CD4-positive, alpha-beta T cell (primary cell): ENCODE measurements at regions of chr2 and their contacts with region 1.

Region 1: DNA sequence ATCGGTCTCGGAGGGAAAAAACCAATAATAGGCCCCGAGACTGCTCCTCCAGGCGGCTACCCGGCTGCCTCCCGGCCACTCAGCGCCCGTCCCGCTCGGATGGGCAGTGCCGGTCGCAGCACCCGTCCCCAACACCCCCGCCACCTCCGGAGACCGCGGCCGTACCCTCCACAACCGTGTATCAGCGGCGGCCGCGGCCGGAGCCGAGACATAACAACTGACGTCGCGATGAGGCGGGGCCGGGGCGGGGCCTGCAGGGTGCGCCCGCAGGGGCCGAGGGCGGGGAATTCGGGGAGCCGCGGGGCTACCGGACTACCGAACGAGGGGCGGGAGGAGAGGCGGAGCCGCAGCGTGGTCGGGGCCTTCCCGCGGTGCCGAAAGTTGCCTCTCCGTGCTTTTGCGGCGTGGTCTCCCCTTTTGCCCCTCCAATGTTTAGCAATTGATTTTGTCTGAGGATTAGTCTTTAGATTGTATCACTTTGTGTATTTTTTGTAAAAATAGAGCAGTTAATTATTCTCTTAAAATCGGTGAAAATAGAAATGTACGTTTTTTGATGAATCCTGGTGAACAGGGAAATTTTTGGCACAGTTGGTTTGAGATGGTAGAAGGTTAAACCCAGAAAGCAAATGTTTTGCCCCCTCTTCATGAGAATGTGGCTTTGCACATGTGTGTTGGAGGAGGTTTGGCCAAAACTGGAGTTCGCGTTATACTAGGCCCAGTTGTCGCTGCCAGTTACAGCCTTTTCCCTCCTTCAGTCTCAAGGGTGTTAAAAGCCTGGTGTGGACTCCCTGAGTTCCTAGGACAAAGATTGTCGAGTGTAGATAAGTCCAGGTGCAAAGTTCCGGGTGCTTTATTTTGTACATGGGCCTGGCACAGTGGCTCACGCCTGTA is at the start of gene RNF103:
- DNase-seq: peak; percentile 85 to 96 (median 94)
- ATAC-seq: peak; percentile 88
- H3K4me3 ChIP-seq: peak within 1 kb of the TSS; percentile 61
- H3K4me3 Mint-ChIP-seq: peak within 1 kb of the TSS; percentile 94
- H3K27ac ChIP-seq: peak within 1 kb of the TSS; percentile 91 to 93
- H3K27ac Mint-ChIP-seq: peak within 1 kb of the TSS; percentile 92
- H3K4me1 ChIP-seq: peaks cover 10% of the 10 kb centered on the region
- H3K4me1 Mint-ChIP-seq: peaks cover 40% of the 10 kb centered on the region
- H3K27me3 ChIP-seq: no peaks in the 10 kb centered on the region
- H3K27me3 Mint-ChIP-seq: peaks cover 3% of the 10 kb centered on the region
- CTCF ChIP-seq: no peak
- total RNA-seq, gene RNF103: 124 to 130 TPM

Region 2: GRCh38 chr2:86195055-86195807 is 428.7 kb before region 1 on chr2 and contains the start of gene IMMT:
- CTCF ChIA-PET with region 1: no interaction called
- POLR2A ChIA-PET with region 1: no interaction called
- intact Hi-C with region 1: loop called in 1 of 2 experiments (anchors 5 kb)
- DNase-seq: peak; percentile 84 to 97 (median 90)
- ATAC-seq: peak; percentile 89
- H3K4me3 ChIP-seq: peak within 1 kb of the TSS; percentile 87
- H3K4me3 Mint-ChIP-seq: peak within 1 kb of the TSS; percentile 89
- H3K27ac ChIP-seq: peak within 1 kb of the TSS; percentile 96 to 98
- H3K27ac Mint-ChIP-seq: peak within 1 kb of the TSS; percentile 85
- H3K4me1 ChIP-seq: peaks cover 45% of the 10 kb centered on the region
- H3K4me1 Mint-ChIP-seq: peaks cover 71% of the 10 kb centered on the region
- H3K27me3 ChIP-seq: no peaks in the 10 kb centered on the region
- H3K27me3 Mint-ChIP-seq: no peaks in the 10 kb centered on the region
- CTCF ChIP-seq: no peak
- total RNA-seq, gene IMMT: 39.5 to 40.8 TPM

Region 3: DNA sequence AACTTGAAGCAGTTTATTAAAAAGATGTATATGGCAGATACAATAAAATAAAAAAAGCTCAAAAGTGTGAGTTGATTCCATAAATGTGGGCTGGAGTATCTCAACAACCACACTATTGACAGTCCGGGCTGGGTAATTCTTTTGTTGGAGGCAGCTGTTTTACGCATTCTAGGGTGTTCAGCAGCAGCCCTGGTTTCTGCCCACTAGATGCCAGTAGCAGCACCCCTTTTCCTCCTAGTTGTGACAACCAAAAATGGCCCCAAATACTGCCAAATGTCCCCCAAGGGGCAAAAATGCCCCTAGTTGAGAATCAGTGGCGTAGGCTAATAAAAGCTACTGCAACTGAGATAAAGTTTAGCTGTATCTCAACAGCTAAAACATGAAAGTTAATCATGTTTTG is 105.4 kb before region 1 on chr2:
- CTCF ChIA-PET with region 1: interaction called, 7 read pairs
- POLR2A ChIA-PET with region 1: interaction called, 12 read pairs
- intact Hi-C with region 1: loop called (anchors 1 to 5 kb)
- DNase-seq: peak; percentile 14 to 70 (median 32)
- ATAC-seq: peak; percentile 66
- H3K4me3 ChIP-seq: no peak overlapping the region
- H3K4me3 Mint-ChIP-seq: no peak overlapping the region
- H3K27ac ChIP-seq: no peak overlapping the region
- H3K27ac Mint-ChIP-seq: no peak overlapping the region
- H3K4me1 ChIP-seq: no peaks in the 10 kb centered on the region
- H3K4me1 Mint-ChIP-seq: peaks cover 16% of the 10 kb centered on the region
- H3K27me3 ChIP-seq: no peaks in the 10 kb centered on the region
- H3K27me3 Mint-ChIP-seq: no peaks in the 10 kb centered on the region
- CTCF ChIP-seq: peak; percentile 70

Region 4: DNA sequence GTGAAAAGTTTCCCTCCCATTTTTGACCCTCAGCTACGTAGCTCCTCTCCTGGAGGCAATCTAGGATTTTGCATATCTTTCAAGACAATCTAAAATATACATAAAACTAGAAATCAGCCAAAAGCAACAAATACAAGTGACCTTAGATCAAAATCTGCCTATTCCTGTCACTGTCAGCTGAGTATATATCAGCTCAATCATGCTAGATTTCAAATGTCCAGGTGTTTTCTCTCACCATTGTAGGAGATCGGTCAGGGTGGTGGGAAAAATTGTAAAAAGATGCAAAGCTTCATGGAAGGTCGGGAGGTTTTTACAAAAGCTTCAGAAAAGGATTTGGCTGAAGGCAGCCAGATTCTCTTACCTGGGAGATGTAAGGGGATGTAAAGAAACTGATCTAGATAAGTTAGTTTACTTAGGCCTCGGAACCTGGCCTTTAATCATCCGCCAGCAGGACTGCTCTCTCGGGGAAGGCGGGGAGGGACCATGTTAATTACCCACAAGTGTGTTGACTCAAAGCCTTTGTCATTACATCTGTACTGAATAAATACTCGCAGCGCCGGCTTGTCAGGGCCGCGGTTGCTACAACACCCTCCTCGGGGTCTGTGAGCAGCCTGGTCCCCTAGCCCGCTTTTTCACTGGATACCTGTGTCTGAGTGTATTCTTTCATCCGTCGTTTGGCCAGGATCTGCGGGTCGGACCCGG is 67.5 kb before region 1 on chr2:
- CTCF ChIA-PET with region 1: no interaction called
- POLR2A ChIA-PET with region 1: interaction called, 39 read pairs
- intact Hi-C with region 1: no loop called
- DNase-seq: no peak
- ATAC-seq: no peak
- H3K4me3 ChIP-seq: no peak overlapping the region
- H3K4me3 Mint-ChIP-seq: no peak overlapping the region
- H3K27ac ChIP-seq: no peak overlapping the region
- H3K27ac Mint-ChIP-seq: no peak overlapping the region
- H3K4me1 ChIP-seq: peaks cover 35% of the 10 kb centered on the region
- H3K4me1 Mint-ChIP-seq: peaks cover 55% of the 10 kb centered on the region
- H3K27me3 ChIP-seq: no peaks in the 10 kb centered on the region
- H3K27me3 Mint-ChIP-seq: no peaks in the 10 kb centered on the region
- CTCF ChIP-seq: no peak

Region 5: GRCh38 chr2:86584151-86584913 is 39.6 kb before region 1 on chr2:
- CTCF ChIA-PET with region 1: no interaction called
- POLR2A ChIA-PET with region 1: interaction called, 29 read pairs
- intact Hi-C with region 1: no loop called
- DNase-seq: peak in 4 of 14 experiments; percentile 43 to 61 (median 48)
- ATAC-seq: peak; percentile 91
- H3K4me3 ChIP-seq: no peak overlapping the region
- H3K4me3 Mint-ChIP-seq: peak overlapping the region; percentile 32
- H3K27ac ChIP-seq: peak overlapping the region; percentile 1 to 61
- H3K27ac Mint-ChIP-seq: peak overlapping the region; percentile 85
- H3K4me1 ChIP-seq: peaks cover 8% of the 10 kb centered on the region
- H3K4me1 Mint-ChIP-seq: peaks cover 28% of the 10 kb centered on the region
- H3K27me3 ChIP-seq: no peaks in the 10 kb centered on the region
- H3K27me3 Mint-ChIP-seq: no peaks in the 10 kb centered on the region
- CTCF ChIP-seq: no peak

Region 6: GRCh38 chr2:86661333-86661732 is 37.4 kb after region 1 on chr2:
- CTCF ChIA-PET with region 1: no interaction called
- POLR2A ChIA-PET with region 1: no interaction called
- intact Hi-C with region 1: no loop called
- DNase-seq: peak in 1 of 14 experiments; percentile 6
- ATAC-seq: no peak
- H3K4me3 ChIP-seq: no peak overlapping the region
- H3K4me3 Mint-ChIP-seq: no peak overlapping the region
- H3K27ac ChIP-seq: no peak overlapping the region
- H3K27ac Mint-ChIP-seq: no peak overlapping the region
- H3K4me1 ChIP-seq: no peaks in the 10 kb centered on the region
- H3K4me1 Mint-ChIP-seq: no peaks in the 10 kb centered on the region
- H3K27me3 ChIP-seq: no peaks in the 10 kb centered on the region
- H3K27me3 Mint-ChIP-seq: no peaks in the 10 kb centered on the region
- CTCF ChIP-seq: no peak

Region 7: GRCh38 chr2:86794861-86795260 is 171.0 kb after region 1 on chr2:
- CTCF ChIA-PET with region 1: no interaction called
- POLR2A ChIA-PET with region 1: no interaction called
- intact Hi-C with region 1: no loop called
- DNase-seq: peak in 1 of 14 experiments; percentile 74
- ATAC-seq: no peak
- H3K4me3 ChIP-seq: no peak overlapping the region
- H3K4me3 Mint-ChIP-seq: no peak overlapping the region
- H3K27ac ChIP-seq: no peak overlapping the region
- H3K27ac Mint-ChIP-seq: no peak overlapping the region
- H3K4me1 ChIP-seq: peaks cover 21% of the 10 kb centered on the region
- H3K4me1 Mint-ChIP-seq: peaks cover 22% of the 10 kb centered on the region
- H3K27me3 ChIP-seq: peaks cover 46 to 50% of the 10 kb centered on the region in 2 experiments
- H3K27me3 Mint-ChIP-seq: peaks cover 60% of the 10 kb centered on the region
- CTCF ChIP-seq: no peak